ENCODE measurements at regions of chr15 and their contacts with region 1.

Region 1: GRCh38 chr15:33700695-33701304 is 267.5 kb upstream of the CHRM5 start:
- DNase-seq: peak; percentile 21
- ATAC-seq: peak; percentile 95
- H3K4me3 ChIP-seq: no peak overlapping the region
- H3K27ac ChIP-seq: no peak overlapping the region
- H3K4me1 ChIP-seq: no peaks in the 10 kb centered on the region
- H3K27me3 ChIP-seq: peaks cover 0 to 2% of the 10 kb centered on the region in 2 experiments; a peak in 2 of 4 replicates
- CTCF ChIP-seq: peak; percentile 91 to 96 (median 94); a peak in 5 of 6 replicates
- EP300 ChIP-seq: no peak
- POLR2A ChIP-seq: no peak
- RAD21 ChIP-seq: peak; percentile 77

Region 2: GRCh38 chr15:32683906-32684584 is 1016.8 kb before region 1 on chr15:
- CTCF ChIA-PET with region 1: no interaction called
- POLR2A ChIA-PET with region 1: no interaction called
- RAD21 ChIA-PET with region 1: no interaction called
- SMC1A ChIA-PET with region 1: no interaction called
- in situ Hi-C with region 1: no loop called
- intact Hi-C with region 1: no loop called
- DNase-seq: no peak
- ATAC-seq: no peak
- H3K4me3 ChIP-seq: no peak overlapping the region
- H3K27ac ChIP-seq: no peak overlapping the region
- H3K4me1 ChIP-seq: peaks cover 3% of the 10 kb centered on the region; the same call in 1 of the 2 replicates
- H3K27me3 ChIP-seq: no peaks in the 10 kb centered on the region
- CTCF ChIP-seq: no peak
- EP300 ChIP-seq: no peak
- POLR2A ChIP-seq: no peak
- RAD21 ChIP-seq: no peak

Region 3: GRCh38 chr15:33086507-33087121 is 614.2 kb before region 1 on chr15:
- CTCF ChIA-PET with region 1: interaction called, 8 read pairs
- POLR2A ChIA-PET with region 1: no interaction called
- RAD21 ChIA-PET with region 1: interaction called, 3 read pairs
- SMC1A ChIA-PET with region 1: no interaction called
- in situ Hi-C with region 1: loop called (anchors 10 kb)
- intact Hi-C with region 1: loop called (anchors 5 kb)
- DNase-seq: peak; percentile 16
- ATAC-seq: peak; percentile 62
- H3K4me3 ChIP-seq: no peak overlapping the region
- H3K27ac ChIP-seq: no peak overlapping the region
- H3K4me1 ChIP-seq: no peaks in the 10 kb centered on the region
- H3K27me3 ChIP-seq: peaks cover 0 to 3% of the 10 kb centered on the region in 2 experiments; a peak in 2 of 4 replicates
- CTCF ChIP-seq: peak; percentile 44 to 64 (median 63); a peak in 5 of 6 replicates
- EP300 ChIP-seq: no peak
- POLR2A ChIP-seq: no peak
- RAD21 ChIP-seq: peak; percentile 65

Region 4: DNA sequence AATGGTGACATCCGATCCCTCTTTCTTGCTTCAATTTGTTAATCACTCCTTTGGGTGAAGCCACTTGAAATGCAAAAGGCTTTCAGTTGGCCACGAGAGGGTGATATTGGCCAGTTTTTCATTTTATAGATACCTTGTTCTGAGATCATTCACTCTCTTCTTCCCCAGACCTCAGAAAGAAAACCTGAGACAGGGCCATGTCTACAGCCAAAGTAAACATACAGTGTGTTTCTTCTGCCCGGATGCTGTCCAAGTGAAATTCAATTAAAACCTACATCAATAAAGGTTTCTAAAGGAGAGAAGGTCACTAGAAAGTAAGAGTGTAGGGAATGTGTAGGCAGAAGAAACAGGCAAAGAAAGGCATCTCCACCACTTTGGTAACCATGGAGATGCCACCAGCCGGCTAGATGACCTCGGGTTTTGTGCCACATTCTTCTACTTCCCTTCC is 466.8 kb before region 1 on chr15:
- CTCF ChIA-PET with region 1: interaction called, 4 read pairs
- POLR2A ChIA-PET with region 1: no interaction called
- RAD21 ChIA-PET with region 1: interaction called, 8 read pairs
- SMC1A ChIA-PET with region 1: interaction called, 3 read pairs
- in situ Hi-C with region 1: no loop called
- intact Hi-C with region 1: loop called (anchors 2 kb)
- DNase-seq: no peak
- ATAC-seq: peak; percentile 58
- H3K4me3 ChIP-seq: no peak overlapping the region
- H3K27ac ChIP-seq: no peak overlapping the region
- H3K4me1 ChIP-seq: no peaks in the 10 kb centered on the region
- H3K27me3 ChIP-seq: no peaks in the 10 kb centered on the region; a peak in 1 of 4 replicates
- CTCF ChIP-seq: peak; percentile 33 to 47 (median 40); a peak in 5 of 6 replicates
- EP300 ChIP-seq: no peak
- POLR2A ChIP-seq: no peak
- RAD21 ChIP-seq: peak; percentile 48

Region 5: DNA sequence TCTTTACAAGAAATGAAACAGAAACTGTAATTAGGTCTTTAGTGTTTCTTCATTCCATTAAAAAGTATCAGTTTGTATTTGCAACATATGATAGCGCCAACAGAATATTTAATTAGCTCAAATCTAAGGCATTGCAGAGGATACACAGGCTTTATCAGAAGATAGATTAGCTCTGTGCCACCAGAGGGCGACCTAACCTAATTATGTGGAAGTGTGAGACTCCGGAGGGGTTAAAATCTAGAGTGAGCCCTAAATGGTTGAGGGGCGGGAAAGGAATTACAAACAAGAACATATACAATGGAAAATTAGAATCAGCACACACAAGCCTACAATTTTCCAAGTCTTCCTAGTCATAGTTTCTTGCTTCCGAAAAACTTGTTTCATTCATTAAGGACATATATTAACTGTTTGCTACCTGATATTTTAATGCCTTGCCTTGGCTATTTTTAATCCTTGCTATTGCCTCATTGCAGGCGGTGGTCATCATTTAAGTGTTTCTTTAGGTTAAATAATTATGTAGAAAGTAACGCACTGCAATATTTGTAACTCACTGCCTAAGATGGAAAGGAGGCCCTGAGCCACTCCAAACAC is 408.0 kb before region 1 on chr15:
- CTCF ChIA-PET with region 1: interaction called, 153 read pairs
- POLR2A ChIA-PET with region 1: no interaction called
- RAD21 ChIA-PET with region 1: interaction called, 93 read pairs
- SMC1A ChIA-PET with region 1: interaction called, 63 read pairs
- in situ Hi-C with region 1: loop called (anchors 10 kb)
- intact Hi-C with region 1: loop called (anchors 1 kb)
- DNase-seq: no peak
- ATAC-seq: peak; percentile 87
- H3K4me3 ChIP-seq: no peak overlapping the region
- H3K27ac ChIP-seq: no peak overlapping the region
- H3K4me1 ChIP-seq: no peaks in the 10 kb centered on the region
- H3K27me3 ChIP-seq: no peaks in the 10 kb centered on the region; a peak in 1 of 4 replicates
- CTCF ChIP-seq: peak; percentile 60 to 73 (median 67); a peak in 5 of 6 replicates
- EP300 ChIP-seq: no peak
- POLR2A ChIP-seq: no peak
- RAD21 ChIP-seq: peak; percentile 87

Region 6: GRCh38 chr15:33298631-33299030 is 402.2 kb before region 1 on chr15:
- CTCF ChIA-PET with region 1: interaction called, 153 read pairs
- POLR2A ChIA-PET with region 1: no interaction called
- RAD21 ChIA-PET with region 1: interaction called, 93 read pairs
- SMC1A ChIA-PET with region 1: interaction called, 63 read pairs
- in situ Hi-C with region 1: loop called (anchors 10 kb)
- intact Hi-C with region 1: no loop called
- DNase-seq: no peak
- ATAC-seq: no peak
- H3K4me3 ChIP-seq: no peak overlapping the region
- H3K27ac ChIP-seq: no peak overlapping the region
- H3K4me1 ChIP-seq: no peaks in the 10 kb centered on the region
- H3K27me3 ChIP-seq: no peaks in the 10 kb centered on the region; a peak in 1 of 4 replicates
- CTCF ChIP-seq: no peak
- EP300 ChIP-seq: no peak
- POLR2A ChIP-seq: no peak
- RAD21 ChIP-seq: no peak

Region 7: DNA sequence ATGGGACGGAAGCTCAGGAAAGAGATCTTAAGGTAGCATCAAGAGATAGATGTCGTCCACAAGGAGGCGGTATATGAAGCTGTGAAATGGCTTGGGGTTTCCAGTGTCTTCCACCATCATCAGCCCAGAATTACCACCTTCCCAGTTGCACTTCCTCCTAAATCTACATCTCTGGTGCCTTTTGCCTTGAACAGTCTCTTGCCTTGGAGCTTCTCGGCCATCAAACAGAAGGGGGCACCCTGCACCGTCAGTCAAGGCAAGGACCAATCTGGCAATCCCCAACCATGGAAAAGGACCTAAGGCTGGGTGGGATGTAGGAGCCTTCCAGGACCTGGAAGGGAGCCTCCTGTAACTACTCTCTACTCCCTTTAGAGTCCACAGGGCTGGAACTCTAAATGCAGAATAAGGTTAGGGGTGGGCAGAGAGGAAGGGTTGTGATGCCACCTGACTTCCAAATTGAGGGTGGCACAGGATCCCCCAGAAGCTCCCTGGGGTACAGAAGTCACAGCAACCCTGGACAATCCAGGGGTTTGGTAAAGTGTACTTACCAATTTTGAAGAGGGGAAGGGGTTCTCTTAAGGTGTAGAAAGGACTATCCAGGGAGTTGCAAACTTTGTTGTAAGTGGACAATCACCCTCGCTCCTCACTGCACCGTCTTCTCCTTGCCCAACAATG is 391.1 kb before region 1 on chr15:
- CTCF ChIA-PET with region 1: interaction called, 27 read pairs
- POLR2A ChIA-PET with region 1: no interaction called
- RAD21 ChIA-PET with region 1: interaction called, 18 read pairs
- SMC1A ChIA-PET with region 1: interaction called, 15 read pairs
- in situ Hi-C with region 1: no loop called
- intact Hi-C with region 1: no loop called
- DNase-seq: no peak
- ATAC-seq: peak; percentile 76
- H3K4me3 ChIP-seq: no peak overlapping the region
- H3K27ac ChIP-seq: no peak overlapping the region
- H3K4me1 ChIP-seq: no peaks in the 10 kb centered on the region
- H3K27me3 ChIP-seq: peaks cover 0 to 8% of the 10 kb centered on the region in 2 experiments
- CTCF ChIP-seq: peak; percentile 15 to 44 (median 29); a peak in 4 of 6 replicates
- EP300 ChIP-seq: no peak
- POLR2A ChIP-seq: no peak
- RAD21 ChIP-seq: no peak

Region 8: GRCh38 chr15:33716025-33716424 is 15.2 kb after region 1 on chr15:
- CTCF ChIA-PET with region 1: interaction called, 15 read pairs
- POLR2A ChIA-PET with region 1: no interaction called
- RAD21 ChIA-PET with region 1: no interaction called
- SMC1A ChIA-PET with region 1: no interaction called
- in situ Hi-C with region 1: no loop called
- intact Hi-C with region 1: no loop called
- DNase-seq: no peak
- ATAC-seq: no peak
- H3K4me3 ChIP-seq: no peak overlapping the region
- H3K27ac ChIP-seq: no peak overlapping the region
- H3K4me1 ChIP-seq: no peaks in the 10 kb centered on the region
- H3K27me3 ChIP-seq: no peaks in the 10 kb centered on the region
- CTCF ChIP-seq: no peak
- EP300 ChIP-seq: no peak
- POLR2A ChIP-seq: no peak
- RAD21 ChIP-seq: no peak